ENCODE measurements at regions of chr14 and their contacts with region 1.

Region 1: GRCh38 chr14:36647824-36648753 is 13.6 kb upstream of the PAX9 start:
- DNase-seq: peak; percentile 49 to 74
- H3K4me3 ChIP-seq: peak overlapping the region; percentile 24
- H3K4me1 ChIP-seq: no peaks in the 10 kb centered on the region
- H3K27me3 ChIP-seq: peaks cover 10% of the 10 kb centered on the region

Region 2: GRCh38 chr14:36570065-36570464 is 78.0 kb before region 1 on chr14:
- in situ Hi-C with region 1: no loop called
- DNase-seq: no peak
- H3K4me3 ChIP-seq: no peak overlapping the region
- H3K4me1 ChIP-seq: no peaks in the 10 kb centered on the region; the same call in 1 of the 2 replicates
- H3K27me3 ChIP-seq: no peaks in the 10 kb centered on the region

Region 3: GRCh38 chr14:36936013-36936678 is 288.1 kb after region 1 on chr14:
- in situ Hi-C with region 1: loop called (anchors 10 kb)
- DNase-seq: no peak
- H3K4me3 ChIP-seq: no peak overlapping the region
- H3K4me1 ChIP-seq: peaks cover 7% of the 10 kb centered on the region
- H3K27me3 ChIP-seq: peaks cover 5% of the 10 kb centered on the region

Region 4: DNA sequence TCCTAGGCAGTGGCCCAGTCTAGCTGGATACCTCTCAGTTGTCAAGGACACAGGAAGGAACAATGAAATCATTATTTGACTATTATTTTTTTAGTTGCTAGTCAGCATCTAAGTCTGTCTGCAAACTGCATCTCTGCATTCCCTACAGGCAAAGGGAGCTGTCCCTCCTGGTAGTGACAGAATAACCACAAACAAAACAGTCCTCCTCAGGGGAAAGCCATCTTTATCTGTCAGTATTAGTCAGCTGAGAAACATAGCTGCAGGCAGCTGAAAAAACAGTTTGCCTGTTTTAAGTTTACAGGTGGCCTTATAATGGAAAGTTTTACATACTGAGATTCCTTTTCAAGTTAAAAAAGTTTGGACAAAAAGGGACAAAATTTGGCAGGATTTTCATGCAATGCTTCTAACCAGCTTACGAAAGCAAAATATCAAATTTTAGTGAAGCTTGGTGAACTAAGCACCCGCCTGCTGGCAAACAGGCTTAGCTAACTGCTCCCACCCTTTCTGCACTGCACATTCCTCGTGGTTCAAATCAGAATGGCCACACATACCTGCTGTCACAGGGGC is 494.8 kb after region 1 on chr14:
- in situ Hi-C with region 1: loop called (anchors 25 kb)
- DNase-seq: no peak
- H3K4me3 ChIP-seq: no peak overlapping the region
- H3K4me1 ChIP-seq: no peaks in the 10 kb centered on the region
- H3K27me3 ChIP-seq: 0 out of 2 replicates have a peak, but pooled peaks cover 7% of the 10 kb centered on the region